Esophagus muscularis mucosa (tissue), 4 donors: ENCODE measurements at regions of chr9 and their contacts with region 1.

Region 1: GRCh38 chr9:21110708-21111576 is 30.7 kb downstream of the IFNW1 start:
- DNase-seq: no peak
- H3K4me3 ChIP-seq: no peak overlapping the region
- H3K27ac ChIP-seq: no peak overlapping the region
- H3K4me1 ChIP-seq: peaks cover 0 to 8% (median 3%) of the 10 kb centered on the region in 4 donors
- H3K27me3 ChIP-seq: no peaks in the 10 kb centered on the region
- CTCF ChIP-seq: peak; percentile 77 to 87 (median 81)
- EP300 ChIP-seq: no peak
- POLR2A ChIP-seq: no peak

Region 2: GRCh38 chr9:19925817-19926503 is 1185.0 kb before region 1 on chr9:
- intact Hi-C with region 1: loop called (anchors 5 kb)
- DNase-seq: peak; percentile 94
- H3K4me3 ChIP-seq: peak overlapping the region; percentile 43 to 61 (median 45)
- H3K27ac ChIP-seq: no peak overlapping the region
- H3K4me1 ChIP-seq: peaks cover 0 to 10% (median 7%) of the 10 kb centered on the region in 4 donors
- H3K27me3 ChIP-seq: no peaks in the 10 kb centered on the region
- CTCF ChIP-seq: peak; percentile 93 to 96 (median 94)
- EP300 ChIP-seq: no peak
- POLR2A ChIP-seq: no peak